B cell (primary cell): ENCODE measurements at regions of chr1 and their contacts with region 1.

Region 1: GRCh38 chr1:23496490-23497181 is 12.7 kb upstream of the ASAP3 start:
- DNase-seq: no peak
- ATAC-seq: no peak
- H3K4me3 ChIP-seq: no peak overlapping the region
- H3K4me3 Mint-ChIP-seq: no peak overlapping the region
- H3K27ac ChIP-seq: no peak overlapping the region
- H3K27ac Mint-ChIP-seq: no peak overlapping the region
- H3K4me1 ChIP-seq: peaks cover 3 to 13% of the 10 kb centered on the region in 2 donors
- H3K4me1 Mint-ChIP-seq: peaks cover 17% of the 10 kb centered on the region
- H3K27me3 ChIP-seq: peaks cover 0 to 3% (median 0%) of the 10 kb centered on the region in 4 experiments
- H3K27me3 Mint-ChIP-seq: peaks cover 1% of the 10 kb centered on the region
- CTCF ChIP-seq: no peak

Region 2: GRCh38 chr1:23484253-23485001 is 12.2 kb before region 1 on chr1:
- CTCF ChIA-PET with region 1: interaction called, 58 read pairs
- POLR2A ChIA-PET with region 1: interaction called, 7 read pairs
- intact Hi-C with region 1: loop called (anchors 1 kb)
- DNase-seq: peak; percentile 94
- ATAC-seq: peak; percentile 85
- H3K4me3 ChIP-seq: peak overlapping the region in 4 of 5 experiments; percentile 43 to 79 (median 66)
- H3K4me3 Mint-ChIP-seq: peak overlapping the region; percentile 90
- H3K27ac ChIP-seq: no peak overlapping the region
- H3K27ac Mint-ChIP-seq: peak overlapping the region; percentile 82
- H3K4me1 ChIP-seq: peaks cover 14 to 23% of the 10 kb centered on the region in 2 donors
- H3K4me1 Mint-ChIP-seq: peaks cover 29% of the 10 kb centered on the region
- H3K27me3 ChIP-seq: peaks cover 0 to 22% (median 8%) of the 10 kb centered on the region in 4 experiments
- H3K27me3 Mint-ChIP-seq: peaks cover 25% of the 10 kb centered on the region
- CTCF ChIP-seq: peak; percentile 2

Region 3: DNA sequence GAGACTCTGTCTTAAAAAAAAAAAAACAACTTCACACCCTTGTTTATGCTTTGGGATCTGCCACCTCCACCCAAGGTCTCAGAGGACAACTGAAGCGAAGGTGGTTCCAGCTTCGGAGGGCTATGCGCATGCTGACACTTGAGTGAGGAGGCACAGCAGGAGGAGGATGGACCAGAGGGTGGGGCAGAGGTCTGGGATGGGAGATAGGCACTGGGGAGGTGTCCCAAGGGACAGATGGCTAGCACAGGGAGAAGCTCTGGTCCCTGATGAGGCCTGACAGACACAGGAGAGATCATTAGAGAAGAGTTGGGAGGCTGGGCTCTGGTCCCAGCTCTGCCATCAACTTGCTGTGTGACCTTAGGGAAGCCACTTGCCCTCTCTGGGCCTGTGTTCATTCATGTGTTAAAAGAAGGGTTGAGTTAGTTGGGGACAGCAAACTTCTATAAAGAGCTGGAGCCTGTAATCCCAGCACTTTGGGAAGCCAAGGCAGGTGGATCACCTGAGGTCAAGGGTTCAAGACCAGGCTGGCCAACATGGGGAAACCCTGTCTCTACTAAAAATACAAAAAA is 17.6 kb after region 1 on chr1:
- CTCF ChIA-PET with region 1: interaction called, 62 read pairs
- POLR2A ChIA-PET with region 1: no interaction called
- intact Hi-C with region 1: no loop called
- DNase-seq: no peak
- ATAC-seq: no peak
- H3K4me3 ChIP-seq: no peak overlapping the region
- H3K4me3 Mint-ChIP-seq: no peak overlapping the region
- H3K27ac ChIP-seq: no peak overlapping the region
- H3K27ac Mint-ChIP-seq: no peak overlapping the region
- H3K4me1 ChIP-seq: peaks cover 0 to 4% of the 10 kb centered on the region in 2 donors
- H3K4me1 Mint-ChIP-seq: no peaks in the 10 kb centered on the region
- H3K27me3 ChIP-seq: no peaks in the 10 kb centered on the region
- H3K27me3 Mint-ChIP-seq: no peaks in the 10 kb centered on the region
- CTCF ChIP-seq: no peak

Region 4: DNA sequence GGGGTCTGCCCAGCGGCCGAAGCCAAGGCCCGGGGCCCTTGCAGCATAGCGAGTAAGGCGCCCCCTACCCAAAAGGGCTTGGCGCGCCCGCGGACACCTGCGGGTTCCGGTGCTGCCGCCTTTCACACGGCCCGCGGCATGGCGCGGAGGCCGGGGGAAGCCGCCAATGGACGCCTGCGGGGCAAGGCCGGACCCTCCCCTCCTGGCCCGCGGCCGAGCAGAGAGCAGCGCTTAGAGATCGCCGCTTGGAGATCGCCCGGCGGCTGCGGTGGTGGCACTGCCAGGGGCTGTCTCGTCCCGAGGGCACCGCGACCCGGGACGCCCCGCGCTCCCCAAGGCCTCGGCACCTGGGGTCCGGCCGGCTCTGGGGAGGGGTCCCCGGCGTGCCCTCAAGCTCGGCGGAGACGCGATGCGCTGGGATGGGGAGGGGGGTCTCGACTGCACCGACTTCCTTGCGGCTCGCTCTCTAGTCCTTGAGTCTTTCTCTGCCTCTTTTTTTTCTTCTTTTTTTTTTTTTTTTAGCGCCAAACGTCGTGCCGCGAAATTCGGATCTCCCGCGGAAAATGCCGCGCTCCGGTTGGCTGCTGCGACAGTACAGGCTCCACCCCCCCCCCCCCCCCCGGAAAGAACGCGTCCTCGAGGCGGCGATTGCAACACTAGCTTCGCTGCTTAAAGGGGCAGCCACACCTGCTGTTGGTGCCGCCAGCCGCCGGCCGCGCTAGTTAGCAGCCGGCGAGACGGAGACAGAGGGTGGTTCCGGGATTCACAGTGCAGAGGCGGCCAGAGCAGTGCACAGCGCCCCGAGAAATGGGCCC is 34.3 kb after region 1 on chr1 and contains the start of gene E2F2:
- CTCF ChIA-PET with region 1: interaction called, 332 read pairs
- POLR2A ChIA-PET with region 1: interaction called, 10 read pairs
- intact Hi-C with region 1: no loop called
- DNase-seq: peak; percentile 91
- ATAC-seq: peak; percentile 83
- H3K4me3 ChIP-seq: peak within 1 kb of the TSS; percentile 40 to 71 (median 63)
- H3K4me3 Mint-ChIP-seq: peak within 1 kb of the TSS; percentile 85
- H3K27ac ChIP-seq: no peak within 1 kb of the TSS
- H3K27ac Mint-ChIP-seq: peak within 1 kb of the TSS; percentile 61
- H3K4me1 ChIP-seq: peaks cover 69 to 75% of the 10 kb centered on the region in 2 donors
- H3K4me1 Mint-ChIP-seq: peaks cover 79% of the 10 kb centered on the region
- H3K27me3 ChIP-seq: peaks cover 0 to 7% (median 0%) of the 10 kb centered on the region in 4 experiments
- H3K27me3 Mint-ChIP-seq: no peaks in the 10 kb centered on the region
- CTCF ChIP-seq: no peak
- total RNA-seq, gene E2F2: 1.2 and 3.2 TPM in 2 replicates

Region 5: DNA sequence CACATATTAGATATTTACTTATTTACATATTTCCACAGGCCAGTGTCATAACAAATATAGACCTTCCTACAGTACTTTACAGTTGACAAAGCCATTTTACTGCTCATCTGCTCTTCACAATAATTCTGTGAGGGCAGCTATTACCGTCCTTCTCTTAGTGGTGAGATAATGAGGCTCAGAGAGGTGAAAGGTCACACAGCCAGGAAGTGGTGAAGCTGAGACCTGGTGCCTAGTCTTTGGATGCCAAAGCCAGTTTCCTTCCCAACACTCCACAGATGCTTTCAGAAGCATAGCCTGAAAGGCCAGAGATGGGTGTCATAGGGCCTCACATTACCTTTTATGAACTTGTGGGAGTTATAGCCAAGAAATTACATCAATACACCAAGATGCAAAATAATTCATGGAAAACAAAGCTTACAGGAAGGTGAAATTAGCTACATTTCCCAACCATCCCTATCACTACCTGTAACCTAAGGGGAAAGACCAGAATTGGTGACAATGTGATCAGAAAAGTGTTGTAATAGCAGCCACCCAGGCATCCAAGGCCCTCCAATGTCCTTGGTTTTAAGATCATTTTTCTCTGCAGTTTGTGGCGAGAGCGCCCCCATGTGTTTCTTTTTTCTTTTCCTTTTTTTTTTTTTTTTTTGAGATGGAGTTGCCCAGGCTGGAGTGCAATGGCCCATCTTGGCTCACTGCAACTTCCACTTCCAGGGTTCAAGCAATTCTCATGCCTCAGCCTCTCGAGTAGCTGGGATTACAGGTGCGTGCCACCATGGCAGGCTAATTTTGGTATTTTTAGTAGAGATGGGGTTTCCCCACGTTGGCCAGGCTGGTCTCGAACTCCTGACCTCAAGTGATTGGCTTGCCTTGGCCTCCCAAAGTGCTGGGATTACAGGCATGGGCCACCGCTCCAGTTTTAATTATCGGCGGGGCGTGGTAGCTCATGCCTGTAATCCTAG is 168.5 kb after region 1 on chr1:
- CTCF ChIA-PET with region 1: interaction called, 16 read pairs
- POLR2A ChIA-PET with region 1: no interaction called
- intact Hi-C with region 1: no loop called
- DNase-seq: peak; percentile 46
- ATAC-seq: no peak
- H3K4me3 ChIP-seq: no peak overlapping the region
- H3K4me3 Mint-ChIP-seq: no peak overlapping the region
- H3K27ac ChIP-seq: no peak overlapping the region
- H3K27ac Mint-ChIP-seq: no peak overlapping the region
- H3K4me1 ChIP-seq: no peaks in the 10 kb centered on the region
- H3K4me1 Mint-ChIP-seq: peaks cover 5% of the 10 kb centered on the region
- H3K27me3 ChIP-seq: peaks cover 0 to 2% (median 0%) of the 10 kb centered on the region in 4 experiments
- H3K27me3 Mint-ChIP-seq: no peaks in the 10 kb centered on the region
- CTCF ChIP-seq: peak; percentile 54

Region 6: DNA sequence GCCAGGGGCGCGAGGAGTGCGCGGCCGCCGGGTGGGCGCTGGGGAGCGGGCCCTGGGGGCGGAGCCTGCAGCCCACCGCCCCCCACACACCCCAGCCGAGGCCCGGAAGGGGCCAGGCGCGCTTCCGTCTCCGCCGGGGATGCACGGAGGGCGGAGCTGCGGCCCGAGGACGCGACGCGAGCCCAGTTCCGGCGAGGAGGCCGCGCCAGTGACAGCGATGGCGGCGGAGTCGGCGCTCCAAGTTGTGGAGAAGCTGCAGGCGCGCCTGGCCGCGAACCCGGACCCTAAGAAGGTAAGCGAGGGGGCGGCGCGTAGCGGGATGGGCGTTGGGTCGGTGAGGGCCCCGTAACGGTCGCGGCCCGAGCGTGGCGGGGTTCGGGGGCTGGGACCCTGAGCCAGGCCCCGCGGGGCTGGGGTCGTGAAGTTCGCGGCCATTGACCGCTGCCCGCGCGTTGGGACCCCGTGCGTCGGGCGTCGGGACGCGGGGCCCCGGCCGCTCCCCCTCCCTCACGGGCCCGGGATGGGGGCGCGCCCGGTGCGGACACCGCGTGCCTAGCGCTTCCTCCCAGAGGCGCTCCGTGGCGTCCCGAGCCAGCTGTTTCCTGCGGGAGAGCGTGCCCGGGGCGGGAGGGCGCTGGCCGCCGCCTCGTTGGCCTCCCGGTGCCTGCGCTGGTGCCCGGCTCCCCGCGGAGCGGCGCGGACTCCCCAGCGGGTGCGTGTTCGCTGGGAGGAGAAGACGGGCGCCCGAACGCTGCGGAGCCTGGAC is 246.8 kb after region 1 on chr1 and contains the start of gene ELOA:
- CTCF ChIA-PET with region 1: interaction called, 6 read pairs
- POLR2A ChIA-PET with region 1: interaction called, 16 read pairs
- intact Hi-C with region 1: no loop called
- DNase-seq: peak; percentile 84
- ATAC-seq: peak; percentile 91
- H3K4me3 ChIP-seq: peak within 1 kb of the TSS; percentile 72 to 92 (median 86)
- H3K4me3 Mint-ChIP-seq: peak within 1 kb of the TSS; percentile 93
- H3K27ac ChIP-seq: peak within 1 kb of the TSS; percentile 68 to 88
- H3K27ac Mint-ChIP-seq: peak within 1 kb of the TSS; percentile 94
- H3K4me1 ChIP-seq: peaks cover 22 to 36% of the 10 kb centered on the region in 2 donors
- H3K4me1 Mint-ChIP-seq: peaks cover 50% of the 10 kb centered on the region
- H3K27me3 ChIP-seq: no peaks in the 10 kb centered on the region
- H3K27me3 Mint-ChIP-seq: no peaks in the 10 kb centered on the region
- CTCF ChIP-seq: no peak
- total RNA-seq, gene ELOA: 53.0 and 56.6 TPM in 2 replicates